PC-3 (cell line): ENCODE measurements at regions of chr20 and their contacts with region 1.

Region 1: GRCh38 chr20:10536531-10536930 is 101.4 kb downstream of the SLX4IP start:
- DNase-seq: peak; percentile 73
- ATAC-seq: peak; percentile 25
- H3K4me3 ChIP-seq: no peak overlapping the region
- H3K27ac ChIP-seq: peak overlapping the region; percentile 19
- H3K4me1 ChIP-seq: peaks cover 41% of the 10 kb centered on the region
- H3K27me3 ChIP-seq: no peaks in the 10 kb centered on the region
- CTCF ChIP-seq: peak; percentile 77

Region 2: GRCh38 chr20:10316582-10316981 is 219.9 kb before region 1 on chr20:
- CTCF ChIA-PET with region 1: interaction called, 3 read pairs
- POLR2A ChIA-PET with region 1: no interaction called
- intact Hi-C with region 1: loop called (anchors 5 kb)
- DNase-seq: peak; percentile 57
- ATAC-seq: peak; percentile 45
- H3K4me3 ChIP-seq: no peak overlapping the region
- H3K27ac ChIP-seq: no peak overlapping the region
- H3K4me1 ChIP-seq: no peaks in the 10 kb centered on the region
- H3K27me3 ChIP-seq: peaks cover 27% of the 10 kb centered on the region
- CTCF ChIP-seq: peak; percentile 73

Region 3: GRCh38 chr20:10434467-10434831 is 102.1 kb before region 1 on chr20:
- CTCF ChIA-PET with region 1: no interaction called
- POLR2A ChIA-PET with region 1: no interaction called
- intact Hi-C with region 1: loop called (anchors 2 kb)
- DNase-seq: peak; percentile 99
- ATAC-seq: peak; percentile 76
- H3K4me3 ChIP-seq: peak overlapping the region; percentile 73
- H3K27ac ChIP-seq: peak overlapping the region; percentile 79
- H3K4me1 ChIP-seq: peaks cover 42% of the 10 kb centered on the region
- H3K27me3 ChIP-seq: no peaks in the 10 kb centered on the region
- CTCF ChIP-seq: no peak

Region 4: GRCh38 chr20:10469599-10469998 is 66.9 kb before region 1 on chr20:
- CTCF ChIA-PET with region 1: interaction called, 3 read pairs
- POLR2A ChIA-PET with region 1: no interaction called
- intact Hi-C with region 1: loop called (anchors 1 kb)
- DNase-seq: peak; percentile 87
- ATAC-seq: peak; percentile 79
- H3K4me3 ChIP-seq: no peak overlapping the region
- H3K27ac ChIP-seq: peak overlapping the region; percentile 23
- H3K4me1 ChIP-seq: peaks cover 18% of the 10 kb centered on the region
- H3K27me3 ChIP-seq: no peaks in the 10 kb centered on the region
- CTCF ChIP-seq: peak; percentile 80

Region 5: GRCh38 chr20:10476319-10476724 is 60.2 kb before region 1 on chr20:
- CTCF ChIA-PET with region 1: interaction called, 3 read pairs
- POLR2A ChIA-PET with region 1: no interaction called
- intact Hi-C with region 1: loop called (anchors 2 kb)
- DNase-seq: peak; percentile 80
- ATAC-seq: peak; percentile 96
- H3K4me3 ChIP-seq: no peak overlapping the region
- H3K27ac ChIP-seq: peak overlapping the region; percentile 45
- H3K4me1 ChIP-seq: peaks cover 15% of the 10 kb centered on the region
- H3K27me3 ChIP-seq: no peaks in the 10 kb centered on the region
- CTCF ChIP-seq: peak; percentile 44; the same call in 1 of the 2 replicates